T-cell (primary cell): ENCODE measurements at regions of chr7 and their contacts with region 1.

Region 1: GRCh38 chr7:992709-993607 is 10.0 kb downstream of the CYP2W1 start:
- DNase-seq: peak; percentile 80 to 96 (median 92)
- ATAC-seq: peak; percentile 99
- H3K4me3 ChIP-seq: no peak overlapping the region
- H3K4me3 Mint-ChIP-seq: no peak overlapping the region
- H3K27ac ChIP-seq: no peak overlapping the region
- H3K27ac Mint-ChIP-seq: no peak overlapping the region
- H3K4me1 ChIP-seq: peaks cover 0 to 13% of the 10 kb centered on the region in 2 experiments
- H3K4me1 Mint-ChIP-seq: peaks cover 4 to 5% (median 4%) of the 10 kb centered on the region in 3 donors
- H3K27me3 ChIP-seq: peaks cover 0 to 17% of the 10 kb centered on the region in 2 experiments
- H3K27me3 Mint-ChIP-seq: peaks cover 0 to 2% of the 10 kb centered on the region in 2 donors

Region 2: DNA sequence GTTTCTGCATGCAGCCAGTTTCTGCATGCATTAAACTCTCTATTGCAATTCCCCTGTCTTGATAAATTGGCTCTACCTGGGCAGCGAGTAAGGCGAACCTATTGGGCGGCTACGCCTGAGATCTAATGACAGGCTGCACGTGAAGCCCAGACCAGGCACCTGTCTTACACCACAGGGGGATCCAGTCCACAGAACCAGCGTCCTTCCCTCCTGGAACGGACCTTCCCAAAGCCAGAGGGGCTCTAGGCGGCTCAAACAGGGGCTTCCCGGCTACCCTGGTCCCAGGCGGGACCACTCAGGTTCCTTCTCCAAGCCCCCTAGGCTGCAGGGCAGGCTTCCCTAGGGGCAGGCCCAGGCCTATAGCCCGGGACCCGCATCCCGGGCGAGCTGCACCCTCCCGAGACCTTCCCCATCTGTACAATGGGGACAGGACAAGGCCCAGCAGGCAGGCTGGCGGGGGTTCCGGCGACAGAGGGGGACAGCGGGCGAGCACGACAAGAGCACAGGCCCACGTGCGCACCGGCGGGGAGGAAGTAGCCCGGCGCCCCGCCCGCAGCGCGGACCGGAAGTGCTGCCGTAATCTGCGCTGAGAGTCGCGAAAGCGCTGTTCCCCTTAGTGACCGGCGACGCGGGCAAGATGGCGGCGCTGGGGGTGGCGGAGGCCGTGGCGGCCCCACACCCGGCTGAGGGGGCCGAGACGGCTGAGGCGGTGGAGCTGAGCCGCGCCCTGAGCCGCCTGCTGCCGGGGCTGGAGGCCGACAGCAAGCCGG is 266.7 kb before region 1 on chr7 and contains the start of gene DNAAF5:
- CTCF ChIA-PET with region 1: no interaction called
- POLR2A ChIA-PET with region 1: no interaction called
- DNase-seq: peak; percentile 70 to 90 (median 82)
- ATAC-seq: peak; percentile 88 to 92 (median 90)
- H3K4me3 ChIP-seq: peak within 1 kb of the TSS; percentile 77 to 88
- H3K4me3 Mint-ChIP-seq: peak within 1 kb of the TSS; percentile 69 to 80 (median 79)
- H3K27ac ChIP-seq: peak within 1 kb of the TSS; percentile 56
- H3K27ac Mint-ChIP-seq: peak within 1 kb of the TSS; percentile 63 to 69
- H3K4me1 ChIP-seq: peaks cover 4 to 26% of the 10 kb centered on the region in 2 experiments
- H3K4me1 Mint-ChIP-seq: peaks cover 19 to 33% (median 24%) of the 10 kb centered on the region in 3 donors
- H3K27me3 ChIP-seq: no peaks in the 10 kb centered on the region
- H3K27me3 Mint-ChIP-seq: no peaks in the 10 kb centered on the region
- total RNA-seq, gene DNAAF5: 12.8 to 21.4 (median 17.1) TPM

Region 3: GRCh38 chr7:1065263-1066260 is 72.6 kb after region 1 on chr7:
- CTCF ChIA-PET with region 1: interaction called, 17 to 59 read pairs
- POLR2A ChIA-PET with region 1: no interaction called
- DNase-seq: peak; percentile 56 to 88 (median 78)
- ATAC-seq: peak; percentile 93 to 97 (median 96)
- H3K4me3 ChIP-seq: peak overlapping the region; percentile 32 to 60
- H3K4me3 Mint-ChIP-seq: peak overlapping the region; percentile 54 to 68 (median 64)
- H3K27ac ChIP-seq: no peak overlapping the region
- H3K27ac Mint-ChIP-seq: no peak overlapping the region
- H3K4me1 ChIP-seq: peaks cover 0 to 14% of the 10 kb centered on the region in 2 experiments
- H3K4me1 Mint-ChIP-seq: peaks cover 0 to 15% (median 6%) of the 10 kb centered on the region in 3 donors
- H3K27me3 ChIP-seq: peaks cover 0 to 20% of the 10 kb centered on the region in 2 experiments
- H3K27me3 Mint-ChIP-seq: peaks cover 0 to 4% of the 10 kb centered on the region in 2 donors